ENCODE measurements at regions of chr7 and their contacts with region 1.

Region 1: GRCh38 chr7:104956753-104957450 is 57.1 kb upstream of the KMT2E start:
- DNase-seq: no peak
- ATAC-seq: peak; percentile 47
- H3K4me3 Mint-ChIP-seq: no peak overlapping the region
- H3K27ac Mint-ChIP-seq: peak overlapping the region; percentile 77
- H3K4me1 Mint-ChIP-seq: peaks cover 48% of the 10 kb centered on the region
- H3K27me3 Mint-ChIP-seq: no peaks in the 10 kb centered on the region
- CTCF ChIP-seq: no peak

Region 2: GRCh38 chr7:104973909-104974415 is 17.1 kb after region 1 on chr7:
- CTCF ChIA-PET with region 1: no interaction called
- POLR2A ChIA-PET with region 1: interaction called, 3 read pairs
- intact Hi-C with region 1: loop called (anchors 2 kb)
- DNase-seq: no peak
- ATAC-seq: peak; percentile 68
- H3K4me3 Mint-ChIP-seq: peak overlapping the region; percentile 46
- H3K27ac Mint-ChIP-seq: peak overlapping the region; percentile 83
- H3K4me1 Mint-ChIP-seq: peaks cover 45% of the 10 kb centered on the region
- H3K27me3 Mint-ChIP-seq: no peaks in the 10 kb centered on the region
- CTCF ChIP-seq: no peak